Adrenal gland (tissue), 19 donors: ENCODE measurements at regions of chr5 and their contacts with region 1.

Region 1: GRCh38 chr5:31581498-31582099 is 49.5 kb downstream of the C5orf22 start:
- DNase-seq: peak in 1 of 7 donors; percentile 18
- H3K4me3 ChIP-seq: no peak overlapping the region
- H3K27ac ChIP-seq: no peak overlapping the region
- H3K4me1 ChIP-seq: no peaks in the 10 kb centered on the region
- H3K27me3 ChIP-seq: peaks cover 3% of the 10 kb centered on the region
- CTCF ChIP-seq: peak; percentile 51 to 67 (median 61)
- POLR2A ChIP-seq: no peak

Region 2: DNA sequence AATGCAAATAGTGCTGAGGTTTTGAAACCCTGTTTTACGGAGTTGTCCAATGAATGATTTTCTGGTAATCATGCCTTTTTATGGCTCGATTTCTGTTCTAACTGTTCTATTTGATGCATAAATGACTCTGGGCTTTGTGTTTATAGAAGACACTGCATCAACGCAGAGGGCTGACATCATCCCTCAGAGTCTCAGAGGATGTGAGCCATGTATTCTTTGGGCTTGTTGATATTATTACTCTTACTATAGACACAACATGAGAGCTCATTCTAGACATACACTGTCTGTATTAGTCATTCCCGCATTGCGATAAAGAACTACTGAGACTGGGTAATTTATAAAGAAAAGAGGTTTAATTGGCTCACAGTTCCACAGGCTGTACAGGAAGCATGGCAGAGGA is 356.5 kb before region 1 on chr5:
- intact Hi-C with region 1: no loop called
- DNase-seq: no peak
- H3K4me3 ChIP-seq: no peak overlapping the region
- H3K27ac ChIP-seq: no peak overlapping the region
- H3K4me1 ChIP-seq: no peaks in the 10 kb centered on the region
- H3K27me3 ChIP-seq: no peaks in the 10 kb centered on the region
- CTCF ChIP-seq: no peak
- POLR2A ChIP-seq: no peak

Region 3: DNA sequence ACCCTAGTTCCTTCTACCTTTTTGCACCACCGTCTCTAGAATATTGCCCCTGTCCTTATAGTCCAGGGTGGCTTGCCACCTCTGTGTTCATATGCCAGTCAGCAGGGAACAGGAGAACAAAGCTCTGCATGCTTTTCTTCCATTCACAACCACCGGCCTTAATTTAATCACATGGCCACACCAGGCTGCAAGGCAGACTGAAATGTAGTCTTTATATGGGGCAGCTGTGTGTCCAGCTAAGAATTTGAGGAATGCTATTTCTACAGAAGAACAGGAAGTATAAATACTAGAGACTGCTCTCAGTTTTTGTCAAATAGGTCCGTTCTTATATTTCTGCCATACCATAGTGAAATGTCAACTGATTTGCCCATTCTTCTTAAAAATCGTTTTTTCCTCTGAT is 43.7 kb before region 1 on chr5:
- intact Hi-C with region 1: no loop called
- DNase-seq: no peak
- H3K4me3 ChIP-seq: no peak overlapping the region
- H3K27ac ChIP-seq: no peak overlapping the region
- H3K4me1 ChIP-seq: peaks cover 6 to 17% of the 10 kb centered on the region in 2 donors
- H3K27me3 ChIP-seq: no peaks in the 10 kb centered on the region
- CTCF ChIP-seq: no peak
- POLR2A ChIP-seq: no peak

Region 4: GRCh38 chr5:31809050-31809870 is 227.7 kb after region 1 on chr5:
- intact Hi-C with region 1: loop called (anchors 5 kb)
- DNase-seq: peak; percentile 69 to 88 (median 81)
- H3K4me3 ChIP-seq: no peak overlapping the region
- H3K27ac ChIP-seq: no peak overlapping the region
- H3K4me1 ChIP-seq: no peaks in the 10 kb centered on the region
- H3K27me3 ChIP-seq: no peaks in the 10 kb centered on the region
- CTCF ChIP-seq: peak; percentile 69 to 86 (median 80)
- POLR2A ChIP-seq: no peak

Region 5: DNA sequence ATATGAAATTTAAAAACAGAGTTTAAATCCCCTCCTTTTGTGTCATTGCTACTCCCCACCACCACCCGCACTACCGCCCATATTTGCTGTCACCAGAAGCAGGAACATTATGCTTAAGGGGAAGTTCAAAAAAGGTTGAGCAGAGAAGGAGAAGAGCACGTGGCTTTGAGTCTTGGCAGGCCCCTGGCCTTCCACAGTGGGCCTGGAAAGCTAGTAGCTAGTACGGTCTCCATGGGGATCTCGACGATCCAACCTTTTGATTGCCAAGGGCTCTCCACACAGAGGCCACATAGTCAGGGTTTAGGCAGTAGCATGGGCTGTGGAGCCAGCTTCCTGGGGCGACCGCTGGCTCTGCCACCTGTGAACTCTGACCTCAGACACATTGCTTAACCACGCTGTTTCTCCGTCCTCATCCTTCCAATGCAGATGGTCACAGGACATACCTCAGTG is 502.4 kb after region 1 on chr5:
- intact Hi-C with region 1: loop called (anchors 10 kb)
- DNase-seq: no peak
- H3K4me3 ChIP-seq: no peak overlapping the region
- H3K27ac ChIP-seq: no peak overlapping the region
- H3K4me1 ChIP-seq: no peaks in the 10 kb centered on the region
- H3K27me3 ChIP-seq: no peaks in the 10 kb centered on the region
- CTCF ChIP-seq: no peak
- POLR2A ChIP-seq: no peak